ENCODE measurements at regions of chr9 and their contacts with region 1.

Region 1: DNA sequence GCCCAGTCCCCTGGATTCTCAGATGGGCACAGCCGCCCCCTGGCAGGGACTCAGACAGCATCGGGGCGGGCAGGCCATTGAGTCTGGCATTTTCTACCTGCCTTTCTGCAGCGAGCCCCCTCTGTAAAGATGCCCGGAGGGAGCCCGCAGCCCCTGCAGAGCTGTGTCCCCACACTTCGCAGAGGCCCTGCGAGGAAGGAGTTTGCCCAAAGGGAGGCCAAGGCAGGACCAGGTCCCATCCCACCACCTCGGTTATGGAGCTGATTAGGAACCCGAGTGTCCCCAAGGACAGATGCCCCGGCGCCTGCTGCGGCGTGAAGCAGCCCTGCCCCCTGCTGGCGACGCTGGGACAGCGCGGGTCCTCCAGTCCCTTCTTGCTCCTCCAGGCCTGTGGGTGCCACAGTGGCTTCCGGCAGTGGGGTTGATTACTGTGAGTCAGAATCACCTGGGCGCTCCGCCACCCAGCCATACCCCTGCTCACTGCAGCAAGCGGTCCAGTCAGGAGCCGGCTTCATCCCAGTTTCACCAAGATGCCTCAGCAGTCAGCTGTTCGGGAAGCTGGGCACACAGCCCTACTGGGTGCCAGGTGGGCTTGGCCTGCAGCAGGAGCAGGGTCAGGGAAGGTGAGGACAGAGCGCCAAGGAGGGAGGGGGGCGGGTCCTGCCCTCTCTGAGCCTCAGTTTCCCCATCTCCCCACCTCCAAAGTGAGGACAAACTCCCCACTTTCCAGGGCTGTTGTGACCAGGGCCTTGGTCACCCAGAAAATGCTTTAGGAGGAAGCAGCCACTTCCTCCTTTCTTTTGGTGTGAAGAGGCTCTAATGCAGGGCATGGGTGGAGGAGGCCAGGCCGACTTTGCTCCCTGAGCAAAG is 117.1 kb downstream of the RXRA start:
- DNase-seq: peak; percentile 76 to 94 (median 86)
- ATAC-seq: peak; percentile 100
- H3K4me3 ChIP-seq: no peak overlapping the region
- H3K4me3 Mint-ChIP-seq: no peak overlapping the region
- H3K27ac ChIP-seq: no peak overlapping the region
- H3K27ac Mint-ChIP-seq: peak overlapping the region; percentile 80
- H3K4me1 ChIP-seq: peaks cover 25% of the 10 kb centered on the region
- H3K4me1 Mint-ChIP-seq: peaks cover 25% of the 10 kb centered on the region
- H3K27me3 ChIP-seq: peaks cover 6 to 9% of the 10 kb centered on the region in 2 experiments
- H3K27me3 Mint-ChIP-seq: peaks cover 5% of the 10 kb centered on the region
- CTCF ChIP-seq: peak; percentile 91

Region 2: GRCh38 chr9:134365791-134366688 is 77.4 kb before region 1 on chr9:
- CTCF ChIA-PET with region 1: interaction called, 4 read pairs
- POLR2A ChIA-PET with region 1: no interaction called
- intact Hi-C with region 1: loop called in 1 of 2 experiments (anchors 2 kb)
- DNase-seq: peak in 2 of 14 experiments; percentile 62 to 66
- ATAC-seq: peak; percentile 46
- H3K4me3 ChIP-seq: no peak overlapping the region
- H3K4me3 Mint-ChIP-seq: no peak overlapping the region
- H3K27ac ChIP-seq: no peak overlapping the region
- H3K27ac Mint-ChIP-seq: no peak overlapping the region
- H3K4me1 ChIP-seq: peaks cover 17% of the 10 kb centered on the region
- H3K4me1 Mint-ChIP-seq: peaks cover 4% of the 10 kb centered on the region
- H3K27me3 ChIP-seq: no peaks in the 10 kb centered on the region
- H3K27me3 Mint-ChIP-seq: no peaks in the 10 kb centered on the region
- CTCF ChIP-seq: no peak

Region 3: DNA sequence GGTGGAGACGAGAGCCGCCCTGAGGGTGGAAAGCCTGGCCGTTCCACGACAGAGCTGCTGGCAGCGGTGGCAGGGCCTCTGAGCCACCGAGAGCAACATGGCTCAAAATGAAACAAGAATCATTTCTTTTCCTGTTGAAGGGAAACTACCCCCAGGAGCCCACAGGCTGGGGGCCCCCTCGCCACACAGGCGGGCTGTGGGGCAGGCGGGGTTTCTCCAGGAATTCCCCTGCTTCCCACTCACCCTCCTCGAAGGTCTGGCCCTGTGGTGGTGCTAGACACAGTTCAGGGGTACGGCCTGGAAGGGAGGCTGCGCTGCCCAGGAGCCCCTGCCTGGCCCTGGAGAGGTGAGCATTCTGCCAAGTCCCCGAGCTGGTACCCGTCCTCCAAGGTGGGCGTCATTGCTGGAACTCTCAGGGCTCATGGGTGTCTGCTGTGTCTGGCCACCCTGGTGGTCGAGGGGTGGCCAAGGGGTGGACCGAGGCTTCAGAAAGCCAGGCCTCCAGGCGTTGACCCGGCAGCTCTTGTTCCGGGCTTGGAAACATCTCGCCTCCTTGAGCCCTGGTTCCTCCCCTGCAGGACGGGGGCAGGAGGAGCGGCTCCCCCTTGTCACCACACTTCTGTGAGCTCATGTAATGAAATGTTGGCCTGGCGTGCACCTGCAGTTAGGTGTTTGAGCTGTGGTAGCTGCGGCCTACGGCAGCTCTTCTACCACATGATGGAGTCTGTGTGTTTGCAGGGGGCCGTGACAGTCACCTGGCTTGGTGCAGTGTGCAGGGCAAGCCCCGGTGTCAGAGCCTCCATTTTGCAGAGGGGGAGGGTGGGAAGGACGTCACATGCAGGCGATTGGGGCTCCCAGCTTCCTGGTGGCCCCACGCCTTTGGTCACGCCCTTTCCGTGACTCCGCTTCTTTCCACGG is 51.8 kb before region 1 on chr9:
- CTCF ChIA-PET with region 1: interaction called, 9 read pairs
- POLR2A ChIA-PET with region 1: interaction called, 4 read pairs
- intact Hi-C with region 1: loop called in 1 of 2 experiments (anchors 5 kb)
- DNase-seq: peak; percentile 30 to 94 (median 58)
- ATAC-seq: peak; percentile 70
- H3K4me3 ChIP-seq: peak overlapping the region; percentile 36
- H3K4me3 Mint-ChIP-seq: peak overlapping the region; percentile 88
- H3K27ac ChIP-seq: peak overlapping the region; percentile 88 to 91
- H3K27ac Mint-ChIP-seq: peak overlapping the region; percentile 99
- H3K4me1 ChIP-seq: peaks cover 71% of the 10 kb centered on the region
- H3K4me1 Mint-ChIP-seq: peaks cover 45% of the 10 kb centered on the region
- H3K27me3 ChIP-seq: no peaks in the 10 kb centered on the region
- H3K27me3 Mint-ChIP-seq: no peaks in the 10 kb centered on the region
- CTCF ChIP-seq: no peak